Caco-2 (cell line): ENCODE measurements at regions of chr4 and their contacts with region 1.

Region 1: GRCh38 chr4:99305638-99306400 is 15.0 kb upstream of the ADH1A start:
- DNase-seq: no peak
- H3K4me3 ChIP-seq: no peak overlapping the region
- H3K4me3 Mint-ChIP-seq: no peak overlapping the region
- H3K27ac Mint-ChIP-seq: no peak overlapping the region
- H3K4me1 ChIP-seq: no peaks in the 10 kb centered on the region
- H3K4me1 Mint-ChIP-seq: no peaks in the 10 kb centered on the region
- H3K27me3 ChIP-seq: no peaks in the 10 kb centered on the region
- H3K27me3 Mint-ChIP-seq: no peaks in the 10 kb centered on the region
- CTCF ChIP-seq: no peak

Region 2: GRCh38 chr4:98754736-98755135 is 551.1 kb before region 1 on chr4:
- CTCF ChIA-PET with region 1: no interaction called
- POLR2A ChIA-PET with region 1: no interaction called
- intact Hi-C with region 1: no loop called
- DNase-seq: no peak
- H3K4me3 ChIP-seq: no peak overlapping the region
- H3K4me3 Mint-ChIP-seq: no peak overlapping the region
- H3K27ac Mint-ChIP-seq: no peak overlapping the region
- H3K4me1 ChIP-seq: peaks cover under 1% of the 10 kb centered on the region; the same call in 1 of the 2 replicates
- H3K4me1 Mint-ChIP-seq: no peaks in the 10 kb centered on the region
- H3K27me3 ChIP-seq: no peaks in the 10 kb centered on the region
- H3K27me3 Mint-ChIP-seq: no peaks in the 10 kb centered on the region
- CTCF ChIP-seq: no peak

Region 3: DNA sequence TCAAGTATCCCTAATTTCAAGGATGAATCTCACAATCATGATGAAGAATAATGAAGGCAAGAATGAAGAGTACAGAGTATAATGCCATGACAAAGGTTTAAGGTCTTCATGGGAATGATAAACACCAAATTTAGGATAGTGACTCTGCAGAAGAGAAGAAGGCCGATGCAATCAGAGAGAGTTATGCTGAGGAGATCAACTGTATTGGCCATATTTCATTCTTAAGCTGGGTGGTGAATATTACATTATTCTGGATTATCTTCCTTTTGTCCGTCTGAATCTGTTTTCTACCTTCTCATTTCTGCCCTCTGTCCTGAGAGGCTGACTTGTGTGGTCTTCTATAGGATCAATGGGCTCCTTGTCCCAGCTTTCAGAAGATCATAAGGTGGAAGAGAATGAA is 318.1 kb before region 1 on chr4:
- CTCF ChIA-PET with region 1: no interaction called
- POLR2A ChIA-PET with region 1: no interaction called
- intact Hi-C with region 1: no loop called
- DNase-seq: no peak
- H3K4me3 ChIP-seq: no peak overlapping the region
- H3K4me3 Mint-ChIP-seq: no peak overlapping the region
- H3K27ac Mint-ChIP-seq: no peak overlapping the region
- H3K4me1 ChIP-seq: no peaks in the 10 kb centered on the region
- H3K4me1 Mint-ChIP-seq: no peaks in the 10 kb centered on the region
- H3K27me3 ChIP-seq: no peaks in the 10 kb centered on the region
- H3K27me3 Mint-ChIP-seq: no peaks in the 10 kb centered on the region
- CTCF ChIP-seq: no peak

Region 4: DNA sequence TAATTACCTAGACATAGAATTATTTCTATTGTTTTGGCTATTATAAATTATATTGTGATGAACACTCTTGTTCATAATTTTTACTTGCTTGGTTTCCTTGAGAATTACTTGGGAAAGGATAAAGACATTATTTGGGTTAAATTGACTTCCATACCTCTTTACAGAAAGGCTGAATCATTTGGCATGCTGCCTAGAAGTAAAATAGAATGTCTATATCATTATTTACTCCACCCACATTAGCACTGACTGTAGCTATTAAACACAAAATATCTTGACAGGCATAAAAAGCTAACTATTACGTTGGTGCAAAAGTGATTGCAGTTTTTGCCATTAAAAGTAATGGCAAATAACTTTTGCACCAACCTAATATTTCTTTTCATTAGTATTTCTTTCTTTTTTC is 57.1 kb before region 1 on chr4:
- CTCF ChIA-PET with region 1: no interaction called
- POLR2A ChIA-PET with region 1: no interaction called
- intact Hi-C with region 1: no loop called
- DNase-seq: no peak
- H3K4me3 ChIP-seq: no peak overlapping the region
- H3K4me3 Mint-ChIP-seq: no peak overlapping the region
- H3K27ac Mint-ChIP-seq: no peak overlapping the region
- H3K4me1 ChIP-seq: no peaks in the 10 kb centered on the region
- H3K4me1 Mint-ChIP-seq: no peaks in the 10 kb centered on the region
- H3K27me3 ChIP-seq: no peaks in the 10 kb centered on the region
- H3K27me3 Mint-ChIP-seq: no peaks in the 10 kb centered on the region
- CTCF ChIP-seq: no peak

Region 5: GRCh38 chr4:99293357-99293756 is 12.5 kb before region 1 on chr4:
- CTCF ChIA-PET with region 1: no interaction called
- POLR2A ChIA-PET with region 1: no interaction called
- intact Hi-C with region 1: loop called (anchors 2 kb)
- DNase-seq: no peak
- H3K4me3 ChIP-seq: no peak overlapping the region
- H3K4me3 Mint-ChIP-seq: no peak overlapping the region
- H3K27ac Mint-ChIP-seq: no peak overlapping the region
- H3K4me1 ChIP-seq: no peaks in the 10 kb centered on the region
- H3K4me1 Mint-ChIP-seq: no peaks in the 10 kb centered on the region
- H3K27me3 ChIP-seq: no peaks in the 10 kb centered on the region
- H3K27me3 Mint-ChIP-seq: no peaks in the 10 kb centered on the region
- CTCF ChIP-seq: no peak